ENCODE measurements at regions of chr7 and their contacts with region 1.

Region 1: DNA sequence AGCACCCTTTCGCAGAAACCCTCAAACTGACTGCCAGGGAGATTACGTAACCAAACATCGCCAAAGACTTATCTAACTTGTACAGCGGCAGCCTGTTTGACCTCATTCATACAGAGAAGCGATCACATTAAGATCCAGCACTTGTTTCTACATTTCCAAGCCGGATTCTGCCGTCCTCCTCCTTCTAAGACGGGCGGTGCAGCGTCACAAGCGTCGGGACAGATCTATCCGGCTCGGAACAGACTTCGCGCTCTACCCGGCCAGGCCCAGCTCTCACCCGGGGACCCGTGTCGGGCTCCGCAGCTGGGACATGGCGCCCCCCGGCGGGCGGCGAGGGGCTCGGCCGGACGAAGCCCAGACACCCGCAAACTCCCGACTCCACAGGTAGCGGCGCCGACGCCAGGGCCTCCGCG is 373 bp downstream of the H2AZ2 start:
- DNase-seq: peak; percentile 51
- ATAC-seq: peak; percentile 75
- H3K4me3 ChIP-seq: peak overlapping the region; percentile 75
- H3K27ac ChIP-seq: peak overlapping the region; percentile 87
- H3K4me1 ChIP-seq: peaks cover 8% of the 10 kb centered on the region; the same call in 1 of the 2 replicates
- H3K27me3 ChIP-seq: no peaks in the 10 kb centered on the region
- CTCF ChIP-seq: peak; percentile 82 to 95 (median 88)
- EP300 ChIP-seq: no peak
- POLR2A ChIP-seq: no peak
- RAD21 ChIP-seq: peak; percentile 79

Region 2: GRCh38 chr7:44573464-44574286 is 273.8 kb before region 1 on chr7 and contains the start of gene DDX56:
- CTCF ChIA-PET with region 1: interaction called, 6 read pairs
- POLR2A ChIA-PET with region 1: interaction called, 3 read pairs
- RAD21 ChIA-PET with region 1: interaction called, 6 read pairs
- SMC1A ChIA-PET with region 1: interaction called, 17 read pairs
- in situ Hi-C with region 1: no loop called
- intact Hi-C with region 1: no loop called
- DNase-seq: peak; percentile 84
- ATAC-seq: peak; percentile 97
- H3K4me3 ChIP-seq: peak within 1 kb of the TSS; percentile 94
- H3K27ac ChIP-seq: peak within 1 kb of the TSS; percentile 94
- H3K4me1 ChIP-seq: peaks cover 11% of the 10 kb centered on the region
- H3K27me3 ChIP-seq: no peaks in the 10 kb centered on the region
- CTCF ChIP-seq: no peak
- EP300 ChIP-seq: no peak
- POLR2A ChIP-seq: peak; percentile 96
- RAD21 ChIP-seq: no peak
- polyA plus RNA-seq, gene DDX56: 19.8 to 48.3 TPM

Region 3: GRCh38 chr7:44587843-44588711 is 259.4 kb before region 1 on chr7:
- CTCF ChIA-PET with region 1: interaction called, 25 read pairs
- POLR2A ChIA-PET with region 1: interaction called, 20 read pairs
- RAD21 ChIA-PET with region 1: interaction called, 26 read pairs
- SMC1A ChIA-PET with region 1: interaction called, 14 read pairs
- in situ Hi-C with region 1: loop called (anchors 5 kb)
- intact Hi-C with region 1: loop called (anchors 1 kb)
- DNase-seq: peak; percentile 53
- ATAC-seq: peak; percentile 95
- H3K4me3 ChIP-seq: no peak overlapping the region
- H3K27ac ChIP-seq: no peak overlapping the region
- H3K4me1 ChIP-seq: peaks cover 5% of the 10 kb centered on the region
- H3K27me3 ChIP-seq: no peaks in the 10 kb centered on the region
- CTCF ChIP-seq: peak; percentile 62 to 77 (median 64); a peak in 5 of 6 replicates
- EP300 ChIP-seq: no peak
- POLR2A ChIP-seq: no peak
- RAD21 ChIP-seq: peak; percentile 94

Region 4: GRCh38 chr7:44633254-44634186 is 214.0 kb before region 1 on chr7:
- CTCF ChIA-PET with region 1: interaction called, 4 read pairs
- POLR2A ChIA-PET with region 1: interaction called, 5 read pairs
- RAD21 ChIA-PET with region 1: interaction called, 11 read pairs
- SMC1A ChIA-PET with region 1: interaction called, 5 read pairs
- in situ Hi-C with region 1: no loop called
- intact Hi-C with region 1: loop called (anchors 1 kb)
- DNase-seq: peak; percentile 88
- ATAC-seq: peak; percentile 71
- H3K4me3 ChIP-seq: peak overlapping the region; percentile 39
- H3K27ac ChIP-seq: peak overlapping the region; percentile 68
- H3K4me1 ChIP-seq: peaks cover 87% of the 10 kb centered on the region
- H3K27me3 ChIP-seq: no peaks in the 10 kb centered on the region
- CTCF ChIP-seq: no peak
- EP300 ChIP-seq: peak; percentile 58 to 78; a peak in 3 of 4 replicates
- POLR2A ChIP-seq: peak; percentile 35; the same call in 1 of the 2 replicates
- RAD21 ChIP-seq: peak; percentile 26; the same call in 1 of the 2 replicates

Region 5: GRCh38 chr7:44748045-44748947 is 99.2 kb before region 1 on chr7 and contains the start of gene ZMIZ2:
- CTCF ChIA-PET with region 1: interaction called, 23 read pairs
- POLR2A ChIA-PET with region 1: interaction called, 35 read pairs
- RAD21 ChIA-PET with region 1: interaction called, 46 read pairs
- SMC1A ChIA-PET with region 1: interaction called, 17 read pairs
- in situ Hi-C with region 1: no loop called
- intact Hi-C with region 1: loop called (anchors 5 kb)
- DNase-seq: no peak
- ATAC-seq: peak; percentile 63
- H3K4me3 ChIP-seq: peak within 1 kb of the TSS; percentile 92
- H3K27ac ChIP-seq: peak within 1 kb of the TSS; percentile 92
- H3K4me1 ChIP-seq: peaks cover 17% of the 10 kb centered on the region
- H3K27me3 ChIP-seq: no peaks in the 10 kb centered on the region
- CTCF ChIP-seq: no peak
- EP300 ChIP-seq: no peak
- POLR2A ChIP-seq: peak; percentile 62; the same call in 1 of the 2 replicates
- RAD21 ChIP-seq: no peak
- polyA plus RNA-seq, gene ZMIZ2: 0.71 to 1.5 TPM

Region 6: DNA sequence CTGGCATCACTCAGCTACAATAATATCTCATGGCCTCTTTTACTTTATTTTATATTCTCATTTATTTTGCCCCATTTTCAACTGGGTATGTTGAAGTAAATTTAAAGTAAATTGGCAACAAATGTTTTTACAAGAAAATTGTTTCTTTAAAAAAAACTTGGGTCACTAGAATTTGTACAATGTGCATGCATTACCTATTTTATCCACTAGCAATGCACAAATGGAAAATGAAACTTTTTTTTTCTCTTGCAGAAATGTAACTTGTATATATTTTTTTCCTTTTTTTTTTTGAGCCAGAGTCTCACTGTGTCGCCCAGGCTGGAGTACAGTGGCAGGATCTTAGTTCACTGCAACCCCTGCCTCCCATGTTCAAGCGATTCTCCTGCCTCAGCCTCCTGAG is 10.6 kb after region 1 on chr7:
- CTCF ChIA-PET with region 1: interaction called, 17 read pairs
- POLR2A ChIA-PET with region 1: interaction called, 4 read pairs
- RAD21 ChIA-PET with region 1: interaction called, 19 read pairs
- SMC1A ChIA-PET with region 1: interaction called, 4 read pairs
- in situ Hi-C with region 1: no loop called
- intact Hi-C with region 1: no loop called
- DNase-seq: no peak
- ATAC-seq: no peak; the same call in 2 of the 3 replicates
- H3K4me3 ChIP-seq: no peak overlapping the region
- H3K27ac ChIP-seq: no peak overlapping the region
- H3K4me1 ChIP-seq: no peaks in the 10 kb centered on the region
- H3K27me3 ChIP-seq: no peaks in the 10 kb centered on the region
- CTCF ChIP-seq: 0 out of 6 replicates have a peak, but pooled peaks of 1 of the 3 experiments have one; percentile 8
- EP300 ChIP-seq: no peak
- POLR2A ChIP-seq: no peak
- RAD21 ChIP-seq: no peak

Region 7: GRCh38 chr7:44898039-44898438 is 50.5 kb after region 1 on chr7:
- CTCF ChIA-PET with region 1: no interaction called
- POLR2A ChIA-PET with region 1: no interaction called
- RAD21 ChIA-PET with region 1: no interaction called
- SMC1A ChIA-PET with region 1: no interaction called
- in situ Hi-C with region 1: no loop called
- intact Hi-C with region 1: no loop called
- DNase-seq: no peak
- ATAC-seq: peak; percentile 42; the same call in 2 of the 3 replicates
- H3K4me3 ChIP-seq: no peak overlapping the region
- H3K27ac ChIP-seq: no peak overlapping the region
- H3K4me1 ChIP-seq: no peaks in the 10 kb centered on the region
- H3K27me3 ChIP-seq: no peaks in the 10 kb centered on the region
- CTCF ChIP-seq: no peak
- EP300 ChIP-seq: no peak
- POLR2A ChIP-seq: no peak
- RAD21 ChIP-seq: no peak

Region 8: GRCh38 chr7:44921607-44922359 is 74.3 kb after region 1 on chr7:
- CTCF ChIA-PET with region 1: interaction called, 16 read pairs
- POLR2A ChIA-PET with region 1: interaction called, 3 read pairs
- RAD21 ChIA-PET with region 1: interaction called, 7 read pairs
- SMC1A ChIA-PET with region 1: interaction called, 10 read pairs
- in situ Hi-C with region 1: no loop called
- intact Hi-C with region 1: no loop called
- DNase-seq: peak; percentile 15
- ATAC-seq: peak; percentile 100
- H3K4me3 ChIP-seq: no peak overlapping the region
- H3K27ac ChIP-seq: no peak overlapping the region
- H3K4me1 ChIP-seq: no peaks in the 10 kb centered on the region
- H3K27me3 ChIP-seq: no peaks in the 10 kb centered on the region
- CTCF ChIP-seq: peak; percentile 86 to 92 (median 88)
- EP300 ChIP-seq: no peak
- POLR2A ChIP-seq: no peak
- RAD21 ChIP-seq: peak; percentile 96

Region 9: DNA sequence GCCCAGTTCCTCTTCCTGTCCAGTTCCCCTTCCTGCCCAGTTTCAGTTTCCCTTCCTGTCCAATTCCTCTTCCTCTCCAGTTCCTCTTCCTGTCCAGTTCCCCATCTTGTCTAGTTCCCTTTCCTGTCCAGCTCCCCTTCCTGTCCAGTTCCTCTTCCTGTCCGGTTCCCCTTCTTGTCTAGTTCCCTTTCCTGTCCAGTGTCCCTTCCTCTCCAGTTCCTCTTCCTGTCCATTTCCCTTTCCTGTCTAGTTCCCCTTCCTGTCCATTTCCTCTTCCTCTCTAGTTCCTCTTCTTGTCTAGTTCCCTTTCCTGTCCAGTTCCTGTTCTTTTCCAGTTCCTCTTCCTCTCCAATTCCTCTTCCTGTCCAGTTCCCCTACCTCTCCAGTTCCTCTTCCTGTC is 658.5 kb after region 1 on chr7:
- CTCF ChIA-PET with region 1: no interaction called
- POLR2A ChIA-PET with region 1: no interaction called
- RAD21 ChIA-PET with region 1: no interaction called
- SMC1A ChIA-PET with region 1: no interaction called
- in situ Hi-C with region 1: no loop called
- intact Hi-C with region 1: no loop called
- DNase-seq: no peak
- ATAC-seq: no peak
- H3K4me3 ChIP-seq: no peak overlapping the region
- H3K27ac ChIP-seq: no peak overlapping the region
- H3K4me1 ChIP-seq: no peaks in the 10 kb centered on the region
- H3K27me3 ChIP-seq: no peaks in the 10 kb centered on the region
- CTCF ChIP-seq: no peak
- EP300 ChIP-seq: no peak
- POLR2A ChIP-seq: no peak
- RAD21 ChIP-seq: no peak

Measured in GM12878 (cell line).